ENCODE measurements at regions of chr2 and their contacts with region 1.

Region 1: GRCh38 chr2:55419679-55420438 is at the start of gene CCDC88A:
- H3K4me3 ChIP-seq: peak within 1 kb of the TSS; percentile 72
- H3K27ac ChIP-seq: peak within 1 kb of the TSS; percentile 52; the same call in 1 of the 2 replicates
- H3K4me1 ChIP-seq: peaks cover 4% of the 10 kb centered on the region; the same call in 1 of the 2 replicates
- CTCF ChIP-seq: peak; percentile 87

Region 2: GRCh38 chr2:55431982-55432627 is 12.2 kb after region 1 on chr2:
- CTCF ChIA-PET with region 1: interaction called, 6 read pairs
- POLR2A ChIA-PET with region 1: interaction called, 14 read pairs
- H3K4me3 ChIP-seq: no peak overlapping the region
- H3K27ac ChIP-seq: no peak overlapping the region
- H3K4me1 ChIP-seq: no peaks in the 10 kb centered on the region
- CTCF ChIP-seq: no peak

Region 3: DNA sequence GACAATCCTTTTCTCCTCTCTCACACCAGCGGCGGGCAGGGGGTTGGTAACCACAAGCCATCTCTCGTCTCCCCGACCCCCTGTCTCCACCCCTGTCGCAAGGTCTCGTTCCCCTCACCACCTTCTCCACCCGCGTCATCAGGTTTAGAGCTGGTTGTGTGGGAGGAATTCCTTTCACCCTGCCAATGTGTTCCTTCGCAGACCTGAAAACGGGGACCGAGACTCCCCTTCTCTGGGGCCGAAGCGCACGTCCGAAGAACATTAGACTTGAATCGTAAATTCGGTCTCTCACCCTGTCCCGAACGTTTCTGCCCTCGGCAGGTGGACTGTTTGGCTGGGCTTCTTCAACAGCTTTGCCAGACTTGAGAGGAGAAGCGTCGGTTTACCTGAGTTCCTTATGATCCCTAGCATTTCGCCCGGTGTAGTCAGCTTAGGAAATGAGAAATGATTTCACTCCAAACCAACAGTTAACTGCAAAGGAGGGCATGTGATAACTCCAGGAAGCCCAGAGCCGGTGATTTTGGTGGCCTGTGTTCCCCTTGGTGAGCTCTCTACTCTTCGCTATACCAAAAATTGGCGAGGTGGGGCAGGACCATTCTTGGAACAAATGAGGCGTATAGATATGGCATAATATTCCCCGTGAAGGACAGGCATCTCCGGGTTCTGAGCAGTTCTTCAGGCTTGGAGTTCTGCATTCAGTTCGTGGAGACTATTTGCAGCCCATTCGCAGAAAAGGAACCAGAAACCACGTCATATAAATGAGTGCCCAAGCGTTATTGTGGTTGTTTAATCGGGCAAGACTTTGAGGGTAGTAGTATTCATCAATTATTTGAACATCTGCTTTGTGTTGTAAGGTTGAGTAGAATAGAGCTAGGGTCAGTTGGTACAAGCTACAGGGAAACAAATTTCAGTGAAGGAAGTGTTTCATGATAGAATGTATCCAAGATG is 100.4 kb after region 1 on chr2:
- CTCF ChIA-PET with region 1: no interaction called
- POLR2A ChIA-PET with region 1: interaction called, 23 read pairs
- H3K4me3 ChIP-seq: peak overlapping the region; percentile 79
- H3K27ac ChIP-seq: peak overlapping the region; percentile 54
- H3K4me1 ChIP-seq: no peaks in the 10 kb centered on the region
- CTCF ChIP-seq: no peak